ENCODE measurements at regions of chr19 and their contacts with region 1.

Region 1: DNA sequence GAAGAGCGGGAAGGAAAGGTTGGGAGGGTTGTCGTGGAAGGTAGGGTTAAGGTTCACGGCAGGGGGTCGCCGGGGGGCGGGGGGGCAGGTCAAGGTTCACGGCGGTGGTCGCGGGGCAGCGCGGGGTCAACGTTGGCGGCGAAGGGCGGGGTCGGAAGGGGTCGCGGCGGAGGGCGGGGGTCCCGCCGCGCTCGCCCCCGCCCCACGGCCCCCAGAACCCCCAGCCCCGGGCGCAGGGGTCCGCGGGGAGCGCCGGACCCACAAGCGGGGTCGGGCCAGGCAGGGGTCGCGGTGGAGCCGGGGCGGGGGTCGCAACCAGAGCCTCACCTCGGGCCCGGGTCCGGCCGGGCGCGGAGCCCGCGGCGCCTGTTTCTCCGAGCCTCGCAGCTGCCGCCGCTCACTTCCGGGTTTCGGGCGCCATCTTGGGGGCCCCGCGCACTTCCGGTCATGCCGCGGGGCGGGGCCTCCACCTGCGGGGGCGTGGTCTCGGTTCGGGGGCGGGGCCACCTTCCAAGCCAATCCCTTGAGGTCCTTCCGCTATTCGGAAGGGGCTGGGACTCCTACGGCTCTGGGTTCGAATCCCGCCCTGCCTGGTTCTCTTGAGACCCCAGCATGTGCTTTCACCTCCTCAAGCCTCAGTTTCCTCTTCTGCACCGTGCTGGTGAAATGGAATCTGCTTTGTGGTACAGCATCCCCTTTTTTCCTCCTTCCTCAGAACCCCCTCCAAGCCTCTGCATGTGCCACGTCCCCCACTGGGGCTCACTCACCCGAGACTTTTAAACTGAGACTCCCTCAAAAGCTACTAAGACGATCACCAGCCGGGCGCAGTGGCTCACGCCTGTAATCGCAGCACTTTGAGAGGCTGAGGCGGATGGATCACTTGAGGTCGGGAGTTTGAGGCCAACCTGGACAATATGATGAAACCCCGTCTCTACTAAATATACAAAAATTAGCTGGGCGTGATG is at the start of gene SBNO2:
- DNase-seq: peak; percentile 98
- total RNA-seq, gene SBNO2: 63.5 to 71.0 TPM

Region 2: DNA sequence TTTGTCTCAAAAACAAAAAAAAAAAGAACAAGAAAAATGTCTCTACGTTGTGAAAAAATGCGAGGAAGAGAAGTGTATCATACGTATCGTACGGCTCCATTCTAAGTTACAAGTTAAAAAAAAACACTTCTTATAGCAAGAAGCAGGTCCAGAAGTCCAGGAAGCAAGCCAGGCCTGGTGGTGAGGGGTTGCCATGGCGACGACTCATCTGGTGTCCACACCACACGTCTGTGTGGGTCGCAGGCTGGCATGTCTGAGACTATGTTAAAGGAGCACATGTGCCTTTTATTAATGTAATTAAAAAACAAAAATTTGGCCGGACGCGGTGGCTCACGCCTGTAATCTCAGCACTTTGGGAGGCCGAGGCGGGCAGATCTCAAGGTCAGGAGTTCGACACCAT is 287.1 kb before region 1 on chr19:
- intact Hi-C with region 1: loop called in 1 of 2 experiments (anchors 10 kb)
- DNase-seq: no peak

Region 3: GRCh38 chr19:1131738-1132551 is 42.2 kb before region 1 on chr19:
- intact Hi-C with region 1: loop called in 1 of 2 experiments (anchors 5 kb)
- DNase-seq: peak; percentile 99